Calu3 (cell line): ENCODE measurements at regions of chr4 and their contacts with region 1.

Region 1: GRCh38 chr4:169189372-169189771 is 81.4 kb downstream of the SH3RF1 start:
- DNase-seq: no peak
- H3K4me3 Mint-ChIP-seq: peak overlapping the region; percentile 46
- H3K27ac Mint-ChIP-seq: peak overlapping the region; percentile 78
- H3K4me1 Mint-ChIP-seq: peaks cover 62% of the 10 kb centered on the region
- H3K27me3 Mint-ChIP-seq: no peaks in the 10 kb centered on the region
- CTCF ChIP-seq: no peak

Region 2: GRCh38 chr4:169254546-169254983 is 65.2 kb after region 1 on chr4:
- CTCF ChIA-PET with region 1: no interaction called
- intact Hi-C with region 1: loop called (anchors 5 kb)
- DNase-seq: no peak
- H3K4me3 Mint-ChIP-seq: peak overlapping the region; percentile 68
- H3K27ac Mint-ChIP-seq: peak overlapping the region; percentile 94
- H3K4me1 Mint-ChIP-seq: peaks cover 70% of the 10 kb centered on the region
- H3K27me3 Mint-ChIP-seq: no peaks in the 10 kb centered on the region
- CTCF ChIP-seq: no peak